HCT116 (cell line): ENCODE measurements at regions of chr16 and their contacts with region 1.

Region 1: GRCh38 chr16:48623304-48624016 is 13.5 kb upstream of the N4BP1 start:
- DNase-seq: peak; percentile 46
- ATAC-seq: peak; percentile 98
- H3K4me3 ChIP-seq: peak overlapping the region; percentile 43 to 56
- H3K27ac ChIP-seq: peak overlapping the region; percentile 36; the same call in 1 of the 2 replicates
- H3K4me1 ChIP-seq: peaks cover 3 to 10% of the 10 kb centered on the region in 2 experiments; a peak in 2 of 4 replicates
- H3K27me3 ChIP-seq: no peaks in the 10 kb centered on the region
- CTCF ChIP-seq: peak; percentile 77 to 98 (median 95)
- POLR2A ChIP-seq: no peak
- RAD21 ChIP-seq: peak; percentile 90

Region 2: GRCh38 chr16:48231727-48232492 is 391.6 kb before region 1 on chr16:
- CTCF ChIA-PET with region 1: interaction called, 16 read pairs
- POLR2A ChIA-PET with region 1: no interaction called
- RAD21 ChIA-PET with region 1: interaction called in 1 of 2 experiments, 3 read pairs
- intact Hi-C with region 1: loop called (anchors 5 kb)
- DNase-seq: peak; percentile 35
- ATAC-seq: peak; percentile 96
- H3K4me3 ChIP-seq: no peak overlapping the region
- H3K27ac ChIP-seq: no peak overlapping the region
- H3K4me1 ChIP-seq: no peaks in the 10 kb centered on the region
- H3K27me3 ChIP-seq: no peaks in the 10 kb centered on the region
- CTCF ChIP-seq: peak; percentile 56 to 72 (median 61); a peak in 5 of 6 replicates
- POLR2A ChIP-seq: no peak
- RAD21 ChIP-seq: peak; percentile 72

Region 3: GRCh38 chr16:48526058-48526957 is 97.2 kb before region 1 on chr16:
- CTCF ChIA-PET with region 1: interaction called, 18 read pairs
- POLR2A ChIA-PET with region 1: no interaction called
- RAD21 ChIA-PET with region 1: interaction called in 1 of 2 experiments, 4 read pairs
- intact Hi-C with region 1: no loop called
- DNase-seq: peak; percentile 66
- ATAC-seq: peak; percentile 96
- H3K4me3 ChIP-seq: no peak overlapping the region
- H3K27ac ChIP-seq: no peak overlapping the region
- H3K4me1 ChIP-seq: peaks cover 0 to 26% of the 10 kb centered on the region in 2 experiments; a peak in 2 of 4 replicates
- H3K27me3 ChIP-seq: no peaks in the 10 kb centered on the region
- CTCF ChIP-seq: peak; percentile 63 to 87 (median 66)
- POLR2A ChIP-seq: no peak
- RAD21 ChIP-seq: peak; percentile 97

Region 4: DNA sequence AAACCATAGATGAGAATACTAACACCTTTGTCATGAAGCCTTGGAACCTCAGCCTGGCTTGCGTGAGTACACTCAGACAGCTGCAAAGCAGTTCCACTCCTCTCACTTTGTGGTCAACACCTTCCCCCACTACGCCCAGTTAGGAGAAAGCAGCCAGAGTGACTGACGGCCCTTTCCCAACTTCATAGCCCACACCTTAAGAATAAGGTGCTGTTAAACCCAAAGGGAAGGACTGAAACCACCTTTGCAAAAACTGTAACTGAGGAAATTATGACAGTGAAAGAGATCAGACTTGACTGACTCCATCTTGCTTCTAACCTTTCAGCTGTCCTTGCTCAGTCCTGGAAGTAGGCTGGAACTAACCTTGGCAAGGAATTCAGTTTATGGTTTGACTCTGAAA is 27.1 kb before region 1 on chr16:
- CTCF ChIA-PET with region 1: interaction called, 4 read pairs
- POLR2A ChIA-PET with region 1: interaction called, 3 read pairs
- RAD21 ChIA-PET with region 1: no interaction called
- intact Hi-C with region 1: loop called (anchors 1 kb)
- DNase-seq: no peak
- ATAC-seq: no peak
- H3K4me3 ChIP-seq: no peak overlapping the region
- H3K27ac ChIP-seq: no peak overlapping the region
- H3K4me1 ChIP-seq: no peaks in the 10 kb centered on the region
- H3K27me3 ChIP-seq: no peaks in the 10 kb centered on the region
- CTCF ChIP-seq: no peak
- POLR2A ChIP-seq: no peak
- RAD21 ChIP-seq: no peak